Mammary epithelial cell (primary cell): ENCODE measurements at regions of chr6 and their contacts with region 1.

Region 1: GRCh38 chr6:3766214-3766613 is 14.7 kb upstream of the PXDC1 start:
- DNase-seq: peak; percentile 66
- H3K4me3 ChIP-seq: no peak overlapping the region
- H3K27ac ChIP-seq: peak overlapping the region; percentile 21
- H3K4me1 ChIP-seq: peaks cover 17% of the 10 kb centered on the region
- H3K27me3 ChIP-seq: no peaks in the 10 kb centered on the region
- CTCF ChIP-seq: no peak

Region 2: DNA sequence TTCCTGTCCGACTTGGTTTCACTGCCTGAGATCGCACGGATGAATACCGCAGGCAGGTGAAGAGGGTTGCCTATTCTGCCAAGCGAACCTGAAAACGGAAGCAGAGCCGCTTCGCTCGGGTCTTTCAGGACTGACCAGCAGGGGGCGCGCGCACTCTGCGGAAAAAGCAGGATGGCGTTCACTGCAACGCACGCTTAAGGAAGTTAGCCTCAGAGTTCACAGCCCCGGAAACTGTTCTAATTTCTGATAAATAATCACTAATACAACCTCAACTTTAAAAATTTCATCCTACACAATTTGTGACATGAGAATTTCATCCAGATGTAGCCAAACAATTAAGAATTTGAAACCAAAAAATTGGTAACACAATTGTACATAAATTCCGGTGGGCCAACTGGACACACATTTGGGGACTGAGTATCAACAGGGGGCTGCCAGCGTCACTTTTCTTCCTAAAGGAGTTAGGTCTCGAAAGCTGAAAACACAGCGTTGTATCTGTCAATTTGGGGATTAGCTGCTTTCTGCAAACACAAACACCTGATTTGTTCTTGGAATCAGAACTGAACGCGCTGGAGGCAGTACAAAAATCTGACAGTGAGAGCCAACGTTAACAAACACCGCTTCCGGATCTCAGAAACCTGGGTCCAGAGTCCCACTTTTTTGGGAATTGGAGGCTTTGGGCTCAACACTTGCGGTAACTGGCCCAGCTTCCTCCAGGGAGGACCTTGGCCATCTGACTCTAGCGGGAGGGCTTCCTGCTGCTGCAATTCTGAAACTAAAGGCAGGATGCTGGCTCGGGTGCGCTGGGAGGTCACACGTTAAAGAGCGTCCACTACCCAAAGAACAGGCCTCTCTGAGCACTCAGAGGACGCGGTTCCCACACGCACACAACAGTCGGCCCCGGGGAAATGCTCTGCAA is 23.5 kb before region 1 on chr6:
- CTCF ChIA-PET with region 1: no interaction called
- dilution Hi-C with region 1: no loop called
- in situ Hi-C with region 1: no loop called
- intact Hi-C with region 1: no loop called
- DNase-seq: peak; percentile 74
- H3K4me3 ChIP-seq: no peak overlapping the region
- H3K27ac ChIP-seq: peak overlapping the region; percentile 13
- H3K4me1 ChIP-seq: peaks cover 23% of the 10 kb centered on the region
- H3K27me3 ChIP-seq: no peaks in the 10 kb centered on the region
- CTCF ChIP-seq: peak; percentile 82 to 90

Region 3: GRCh38 chr6:3794092-3794491 is 27.9 kb after region 1 on chr6:
- CTCF ChIA-PET with region 1: no interaction called
- dilution Hi-C with region 1: no loop called
- in situ Hi-C with region 1: no loop called
- intact Hi-C with region 1: loop called (anchors 1 kb)
- DNase-seq: no peak
- H3K4me3 ChIP-seq: no peak overlapping the region
- H3K27ac ChIP-seq: no peak overlapping the region
- H3K4me1 ChIP-seq: peaks cover 42% of the 10 kb centered on the region
- H3K27me3 ChIP-seq: no peaks in the 10 kb centered on the region
- CTCF ChIP-seq: no peak